A549 (cell line): ENCODE measurements at regions of chr17 and their contacts with region 1.

Region 1: DNA sequence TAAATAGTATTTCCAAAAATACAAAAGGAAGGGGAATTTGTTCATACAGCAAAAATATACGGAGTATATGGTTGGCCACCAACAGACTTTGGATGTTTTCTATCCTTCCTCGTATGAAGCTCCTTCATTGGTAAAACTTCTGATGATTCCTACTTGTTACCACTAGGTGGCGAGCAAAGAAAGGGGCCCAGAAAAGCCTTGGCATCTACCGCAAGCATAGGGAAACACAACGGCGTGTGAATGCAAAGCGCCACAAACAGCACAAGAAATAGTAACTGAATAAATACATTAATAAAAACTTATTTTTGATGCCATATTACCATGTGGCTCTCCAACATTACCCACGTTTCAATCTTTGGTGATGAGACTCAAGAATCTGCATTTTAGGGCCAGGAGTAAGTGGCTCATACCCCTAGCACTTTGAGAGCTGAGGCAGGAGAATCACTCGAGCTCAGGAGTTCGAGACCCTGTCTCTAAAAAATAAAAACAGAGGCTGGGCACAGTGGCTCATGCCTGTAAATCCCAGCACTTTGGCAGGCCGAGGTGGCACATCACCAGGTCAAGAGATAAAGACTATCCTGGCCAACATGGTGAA is 34.5 kb downstream of the YWHAE start:
- DNase-seq: peak; percentile 82 to 87
- ATAC-seq: peak; percentile 82 to 84
- H3K4me3 ChIP-seq: no peak overlapping the region
- H3K27ac ChIP-seq: peak overlapping the region in 1 of 2 experiments; percentile 25; a peak in 2 of 6 replicates
- H3K4me1 ChIP-seq: peaks cover 70% of the 10 kb centered on the region
- CTCF ChIP-seq: peak; percentile 96
- EP300 ChIP-seq: no peak
- POLR2A ChIP-seq: no peak
- RAD21 ChIP-seq: peak; percentile 84 to 88

Region 2: GRCh38 chr17:933312-934083 is 432.0 kb before region 1 on chr17:
- CTCF ChIA-PET with region 1: no interaction called
- POLR2A ChIA-PET with region 1: no interaction called
- DNase-seq: peak; percentile 89 to 97
- ATAC-seq: peak; percentile 93
- H3K4me3 ChIP-seq: no peak overlapping the region
- H3K27ac ChIP-seq: peak overlapping the region; percentile 74 to 84
- H3K4me1 ChIP-seq: peaks cover 69% of the 10 kb centered on the region
- CTCF ChIP-seq: no peak
- EP300 ChIP-seq: peak; percentile 85 to 96
- POLR2A ChIP-seq: no peak
- RAD21 ChIP-seq: peak in 1 of 2 experiments; percentile 46; a peak in 1 of 5 replicates

Region 3: GRCh38 chr17:1078831-1079561 is 286.5 kb before region 1 on chr17:
- CTCF ChIA-PET with region 1: no interaction called
- POLR2A ChIA-PET with region 1: no interaction called
- DNase-seq: no peak
- ATAC-seq: no peak
- H3K4me3 ChIP-seq: no peak overlapping the region
- H3K27ac ChIP-seq: no peak overlapping the region; a peak in 1 of 6 replicates
- H3K4me1 ChIP-seq: peaks cover 34% of the 10 kb centered on the region
- CTCF ChIP-seq: no peak
- EP300 ChIP-seq: no peak
- POLR2A ChIP-seq: no peak
- RAD21 ChIP-seq: no peak

Region 4: GRCh38 chr17:1251866-1252608 is 113.5 kb before region 1 on chr17:
- CTCF ChIA-PET with region 1: no interaction called
- POLR2A ChIA-PET with region 1: no interaction called
- DNase-seq: no peak
- ATAC-seq: no peak
- H3K4me3 ChIP-seq: no peak overlapping the region
- H3K27ac ChIP-seq: no peak overlapping the region
- H3K4me1 ChIP-seq: no peaks in the 10 kb centered on the region
- CTCF ChIP-seq: no peak
- EP300 ChIP-seq: no peak
- POLR2A ChIP-seq: no peak
- RAD21 ChIP-seq: no peak

Region 5: DNA sequence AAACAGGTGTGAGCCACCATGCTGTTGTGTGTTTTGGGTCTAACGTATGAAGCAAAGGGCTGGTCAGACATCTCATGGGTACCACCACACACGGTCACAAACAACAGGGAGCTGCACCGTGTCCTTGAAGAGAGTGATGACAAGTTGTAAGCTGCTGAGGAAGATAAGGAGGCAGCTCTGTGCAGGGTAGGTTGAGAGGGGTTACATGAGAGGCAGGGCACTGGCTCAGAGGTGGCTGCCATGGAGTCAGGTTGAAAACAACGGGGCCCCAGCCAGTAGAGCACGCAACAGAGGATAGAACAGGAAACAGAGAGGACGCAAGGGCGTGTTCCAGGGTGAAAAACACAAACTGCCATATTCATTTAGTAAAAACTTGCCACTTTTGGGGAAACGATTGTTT is 33.8 kb before region 1 on chr17:
- CTCF ChIA-PET with region 1: interaction called, 28 read pairs
- POLR2A ChIA-PET with region 1: no interaction called
- DNase-seq: no peak
- ATAC-seq: no peak
- H3K4me3 ChIP-seq: no peak overlapping the region
- H3K27ac ChIP-seq: no peak overlapping the region
- H3K4me1 ChIP-seq: no peaks in the 10 kb centered on the region
- CTCF ChIP-seq: no peak
- EP300 ChIP-seq: no peak
- POLR2A ChIP-seq: no peak
- RAD21 ChIP-seq: no peak

Region 6: GRCh38 chr17:1354030-1354429 is 11.5 kb before region 1 on chr17:
- CTCF ChIA-PET with region 1: interaction called, 30 read pairs
- POLR2A ChIA-PET with region 1: interaction called, 4 read pairs
- DNase-seq: no peak
- ATAC-seq: no peak
- H3K4me3 ChIP-seq: no peak overlapping the region
- H3K27ac ChIP-seq: no peak overlapping the region
- H3K4me1 ChIP-seq: peaks cover 2% of the 10 kb centered on the region; the same call in 1 of the 3 replicates
- CTCF ChIP-seq: no peak
- EP300 ChIP-seq: no peak
- POLR2A ChIP-seq: no peak
- RAD21 ChIP-seq: no peak

Region 7: GRCh38 chr17:1399679-1400512 is 34.4 kb after region 1 on chr17 and contains the start of gene YWHAE:
- CTCF ChIA-PET with region 1: interaction called, 24 read pairs
- POLR2A ChIA-PET with region 1: interaction called, 17 read pairs
- DNase-seq: peak; percentile 96 to 97
- ATAC-seq: peak; percentile 96 to 97
- H3K4me3 ChIP-seq: peak within 1 kb of the TSS; percentile 84
- H3K27ac ChIP-seq: peak within 1 kb of the TSS; percentile 94 to 98
- H3K4me1 ChIP-seq: peaks cover 21% of the 10 kb centered on the region
- CTCF ChIP-seq: no peak
- EP300 ChIP-seq: no peak
- POLR2A ChIP-seq: peak; percentile 95
- RAD21 ChIP-seq: no peak; a peak in 1 of 5 replicates
- polyA plus RNA-seq, gene YWHAE: 1,017 and 1,284 TPM in 2 replicates

Region 8: GRCh38 chr17:1431631-1432104 is 66.1 kb after region 1 on chr17:
- CTCF ChIA-PET with region 1: interaction called, 22 read pairs
- POLR2A ChIA-PET with region 1: no interaction called
- DNase-seq: no peak
- ATAC-seq: no peak
- H3K4me3 ChIP-seq: no peak overlapping the region
- H3K27ac ChIP-seq: no peak overlapping the region
- H3K4me1 ChIP-seq: no peaks in the 10 kb centered on the region
- CTCF ChIP-seq: no peak
- EP300 ChIP-seq: no peak
- POLR2A ChIP-seq: no peak
- RAD21 ChIP-seq: no peak

Region 9: GRCh38 chr17:1516388-1517161 is 151.0 kb after region 1 on chr17 and contains the start of gene INPP5K:
- CTCF ChIA-PET with region 1: interaction called, 38 read pairs
- POLR2A ChIA-PET with region 1: interaction called, 12 read pairs
- DNase-seq: peak; percentile 99
- ATAC-seq: peak; percentile 90 to 95
- H3K4me3 ChIP-seq: peak within 1 kb of the TSS; percentile 76
- H3K27ac ChIP-seq: peak within 1 kb of the TSS; percentile 95
- H3K4me1 ChIP-seq: peaks cover 12% of the 10 kb centered on the region; the same call in 2 of the 3 replicates
- CTCF ChIP-seq: no peak
- EP300 ChIP-seq: no peak
- POLR2A ChIP-seq: peak; percentile 91
- RAD21 ChIP-seq: no peak; a peak in 1 of 5 replicates
- polyA plus RNA-seq, gene INPP5K: 30.8 and 41.8 TPM in 2 replicates